Sigmoid colon (tissue), 7 donors: ENCODE measurements at regions of chr11 and their contacts with region 1.

Region 1: GRCh38 chr11:2151500-2152257 is 9.3 kb downstream of the INS start:
- DNase-seq: peak; percentile 88
- H3K4me3 ChIP-seq: no peak overlapping the region
- H3K27ac ChIP-seq: no peak overlapping the region
- H3K4me1 ChIP-seq: peaks cover 0 to 7% (median 6%) of the 10 kb centered on the region in 4 donors
- H3K27me3 ChIP-seq: peaks cover 5 to 54% (median 47%) of the 10 kb centered on the region in 3 donors
- CTCF ChIP-seq: peak; percentile 67 to 87 (median 84)
- EP300 ChIP-seq: no peak
- POLR2A ChIP-seq: no peak

Region 2: DNA sequence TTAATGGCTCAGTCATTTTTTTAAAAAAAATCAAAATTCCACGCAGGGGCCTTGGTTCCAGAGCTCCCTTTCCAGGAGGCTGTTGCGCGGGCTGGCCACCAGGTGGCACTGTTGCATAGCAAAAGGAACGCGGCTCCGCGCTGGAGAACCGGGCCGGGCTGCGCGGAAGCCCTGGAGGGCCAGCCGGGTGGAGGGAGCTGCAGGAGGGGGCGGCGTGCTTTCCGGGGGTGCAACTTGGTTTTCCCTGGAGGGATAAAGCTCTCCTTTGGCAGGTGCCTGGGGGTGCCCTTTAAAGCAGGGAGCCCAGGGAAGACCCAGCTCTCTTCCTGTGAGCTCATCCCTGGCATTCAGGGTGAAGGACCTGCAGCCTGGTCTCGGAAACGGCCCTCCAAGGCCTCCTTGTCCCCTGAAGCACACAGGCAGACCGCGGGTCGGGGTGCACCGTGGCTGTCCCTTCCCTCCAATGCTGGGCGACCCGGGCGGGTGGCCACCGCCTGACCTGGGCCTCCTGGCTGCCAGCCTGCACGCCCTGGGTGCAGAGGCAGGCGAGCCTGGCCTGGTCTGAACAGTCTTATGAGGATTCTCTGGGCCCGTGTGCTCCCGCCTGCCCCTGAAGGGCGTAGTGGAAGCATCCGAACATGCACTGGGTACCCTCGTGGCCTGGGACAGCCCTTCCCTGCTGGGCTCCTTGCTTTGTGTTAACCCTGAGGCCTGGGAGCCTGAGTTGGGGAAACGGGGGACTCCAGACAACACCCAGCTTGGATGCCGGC is 498.7 kb before region 1 on chr11:
- intact Hi-C with region 1: loop called (anchors 5 kb)
- DNase-seq: peak; percentile 84
- H3K4me3 ChIP-seq: no peak overlapping the region
- H3K27ac ChIP-seq: no peak overlapping the region
- H3K4me1 ChIP-seq: peaks cover 0 to 5% (median 4%) of the 10 kb centered on the region in 4 donors
- H3K27me3 ChIP-seq: peaks cover 0 to 23% (median 0%) of the 10 kb centered on the region in 3 donors
- CTCF ChIP-seq: peak; percentile 89 to 97 (median 94)
- EP300 ChIP-seq: no peak
- POLR2A ChIP-seq: no peak

Region 3: DNA sequence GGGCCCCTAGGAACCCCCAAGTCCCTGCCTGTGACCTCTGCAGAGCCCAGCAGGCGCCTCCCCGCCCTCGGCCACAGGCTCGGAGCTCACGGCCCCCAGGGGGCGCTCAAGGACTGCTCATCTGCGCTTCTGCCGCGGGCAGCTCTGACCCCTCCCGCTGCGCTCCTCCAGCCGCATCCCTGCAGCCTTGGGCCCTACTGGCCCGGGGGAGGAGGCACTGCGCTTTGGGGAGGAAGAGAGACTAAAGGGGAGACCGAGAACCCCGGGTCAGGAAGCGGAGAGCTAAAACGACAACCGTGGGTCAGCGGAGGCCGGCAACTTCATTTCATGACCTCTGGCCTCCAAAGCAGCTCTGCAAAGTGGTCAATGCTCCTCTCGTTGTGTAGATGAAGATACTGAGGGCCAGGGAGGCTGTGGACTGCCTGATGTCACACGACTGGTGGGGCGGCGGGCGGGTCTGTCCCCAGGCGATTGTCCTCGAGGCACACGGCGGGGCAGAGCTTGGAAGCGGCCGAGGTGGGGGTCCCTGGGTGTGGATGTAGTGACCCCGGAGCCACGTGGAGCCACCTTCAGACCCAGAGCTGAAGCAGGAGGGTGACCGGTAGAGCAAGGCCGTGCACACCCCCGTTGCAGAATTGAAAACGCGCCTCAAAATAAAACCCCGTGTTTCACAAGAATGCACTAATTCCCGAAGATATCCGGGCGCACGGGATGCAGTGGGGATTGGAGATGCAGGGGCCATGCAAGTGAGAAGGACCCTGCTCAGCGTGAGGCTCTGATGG is 457.4 kb before region 1 on chr11:
- intact Hi-C with region 1: loop called (anchors 2 kb)
- DNase-seq: peak; percentile 90
- H3K4me3 ChIP-seq: peak overlapping the region; percentile 13 to 54 (median 28)
- H3K27ac ChIP-seq: peak overlapping the region in 3 of 4 donors; percentile 0 to 74 (median 48)
- H3K4me1 ChIP-seq: peaks cover 0 to 17% (median 11%) of the 10 kb centered on the region in 4 donors
- H3K27me3 ChIP-seq: peaks cover 0 to 7% (median 2%) of the 10 kb centered on the region in 3 donors
- CTCF ChIP-seq: peak; percentile 82 to 90 (median 86)
- EP300 ChIP-seq: no peak
- POLR2A ChIP-seq: no peak

Region 4: DNA sequence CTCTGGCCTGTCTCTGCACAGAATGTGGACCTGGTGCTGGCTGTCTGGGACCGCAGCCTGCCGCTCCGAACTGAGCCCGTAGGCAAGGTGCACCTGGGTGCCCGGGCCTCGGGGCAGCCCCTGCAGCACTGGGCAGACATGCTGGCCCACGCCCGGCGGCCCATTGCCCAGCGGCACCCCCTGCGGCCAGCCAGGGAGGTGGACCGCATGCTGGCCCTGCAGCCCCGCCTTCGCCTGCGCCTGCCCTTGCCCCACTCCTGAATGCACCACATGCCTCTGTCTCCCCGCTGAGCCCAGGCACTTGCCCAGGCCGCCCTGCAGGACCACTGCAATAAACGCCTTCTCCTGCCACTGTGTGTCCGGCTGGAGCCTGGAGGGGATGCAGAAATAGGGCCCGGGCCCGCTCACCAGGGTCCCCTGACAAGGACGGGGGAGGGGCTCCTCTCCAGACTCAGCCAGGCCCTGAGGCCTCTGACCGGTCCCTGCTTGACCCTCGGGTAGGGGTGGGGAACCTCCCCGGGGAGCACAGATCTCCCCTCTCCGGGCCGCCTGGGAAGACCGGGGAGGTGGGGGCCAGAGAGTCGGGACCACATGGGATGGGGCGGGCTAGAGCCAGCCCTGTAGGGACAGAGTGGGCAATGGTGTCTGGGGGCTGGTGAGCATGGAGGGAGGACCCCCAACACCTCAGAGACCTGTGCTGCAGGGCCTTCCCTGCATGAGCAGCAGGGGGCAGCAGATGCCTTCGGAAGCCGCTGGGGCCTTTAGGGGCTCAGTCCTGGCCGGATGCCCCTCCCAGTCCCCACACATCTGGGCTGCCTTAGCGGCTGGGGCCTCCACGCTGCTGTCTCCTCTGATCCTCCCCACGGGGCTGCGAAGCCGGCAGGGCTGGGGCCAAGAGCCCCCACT is 314.3 kb before region 1 on chr11:
- intact Hi-C with region 1: loop called (anchors 5 kb)
- DNase-seq: peak; percentile 82
- H3K4me3 ChIP-seq: no peak overlapping the region
- H3K27ac ChIP-seq: no peak overlapping the region
- H3K4me1 ChIP-seq: peaks cover 0 to 12% (median 11%) of the 10 kb centered on the region in 4 donors
- H3K27me3 ChIP-seq: no peaks in the 10 kb centered on the region
- CTCF ChIP-seq: peak; percentile 85 to 91 (median 86)
- EP300 ChIP-seq: no peak
- POLR2A ChIP-seq: no peak

Region 5: DNA sequence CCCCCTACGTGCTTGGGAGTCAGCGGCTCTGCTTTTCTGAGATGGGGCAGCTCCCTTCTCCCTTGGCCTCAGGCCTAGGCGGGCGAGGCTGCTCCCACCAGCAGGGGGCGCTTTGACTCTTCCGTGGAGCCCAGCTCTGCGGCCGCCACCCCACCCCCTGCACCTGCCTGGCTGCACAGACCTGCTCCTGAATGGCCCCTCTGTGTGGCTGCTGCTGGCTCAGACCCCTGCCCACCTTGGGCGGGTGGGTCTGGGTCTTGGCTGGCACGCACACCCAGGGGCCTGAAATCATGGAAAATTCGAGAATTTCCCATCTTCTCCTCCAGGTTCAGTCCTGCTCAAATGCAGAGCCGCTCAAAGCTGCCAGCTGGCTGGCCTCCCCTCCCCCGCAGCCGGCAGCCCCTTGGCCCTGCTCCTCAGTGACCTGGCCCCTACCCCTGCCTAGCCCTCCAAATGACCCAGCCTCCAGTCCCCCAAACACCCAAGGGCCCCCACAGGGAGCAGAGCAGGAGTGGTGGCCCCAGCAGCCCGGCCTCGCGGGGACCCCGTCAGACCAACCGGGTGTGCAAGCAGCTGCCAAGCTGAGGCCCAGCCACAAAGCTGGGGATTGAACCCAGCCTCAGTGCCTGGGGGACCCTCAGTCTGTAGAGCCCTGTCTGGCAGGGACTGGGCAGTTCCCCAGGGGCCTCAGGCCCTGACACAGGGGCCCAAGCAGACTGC is 269.0 kb before region 1 on chr11:
- intact Hi-C with region 1: loop called (anchors 1 kb)
- DNase-seq: peak; percentile 91
- H3K4me3 ChIP-seq: no peak overlapping the region
- H3K27ac ChIP-seq: peak overlapping the region in 3 of 4 donors; percentile 65 to 78 (median 66)
- H3K4me1 ChIP-seq: peaks cover 0 to 31% (median 27%) of the 10 kb centered on the region in 4 donors
- H3K27me3 ChIP-seq: no peaks in the 10 kb centered on the region
- CTCF ChIP-seq: peak; percentile 65 to 86 (median 74)
- EP300 ChIP-seq: no peak
- POLR2A ChIP-seq: no peak

Region 6: GRCh38 chr11:1983601-1983961 is 168.1 kb before region 1 on chr11:
- intact Hi-C with region 1: no loop called
- DNase-seq: peak; percentile 19
- H3K4me3 ChIP-seq: no peak overlapping the region
- H3K27ac ChIP-seq: no peak overlapping the region
- H3K4me1 ChIP-seq: no peaks in the 10 kb centered on the region
- H3K27me3 ChIP-seq: no peaks in the 10 kb centered on the region
- CTCF ChIP-seq: no peak
- EP300 ChIP-seq: no peak
- POLR2A ChIP-seq: no peak